ENCODE measurements at regions of chr12 and their contacts with region 1.

Region 1: GRCh38 chr12:32558903-32559302 is 120.2 kb upstream of the DNM1L start:
- DNase-seq: no peak
- H3K4me3 Mint-ChIP-seq: no peak overlapping the region
- H3K27ac Mint-ChIP-seq: no peak overlapping the region
- H3K4me1 Mint-ChIP-seq: peaks cover 33% of the 10 kb centered on the region
- H3K27me3 Mint-ChIP-seq: peaks cover 2% of the 10 kb centered on the region

Region 2: GRCh38 chr12:32603858-32604257 is 45.0 kb after region 1 on chr12:
- intact Hi-C with region 1: loop called (anchors 1 kb)
- DNase-seq: peak; percentile 56
- H3K4me3 Mint-ChIP-seq: no peak overlapping the region
- H3K27ac Mint-ChIP-seq: peak overlapping the region; percentile 65
- H3K4me1 Mint-ChIP-seq: peaks cover 18% of the 10 kb centered on the region
- H3K27me3 Mint-ChIP-seq: no peaks in the 10 kb centered on the region

Measured in activated T-helper 1 cell treated with anti-CD3 and anti-CD28 coated beads, Interleukin-12 subunit alpha, Interleukin-12 subunit beta, Interleukin-2, Interleukin-4 antibody, amounts not matched to agents 30 ng/mL and 10 ng/mL and 1 ng/mL, durations not matched to agents 14 hours and 24 hours and 36 hours (primary cell).